Activated T-helper 1 cell treated with anti-CD3 and anti-CD28 coated beads, Interleukin-12 subunit alpha, Interleukin-12 subunit beta, Interleukin-2, Interleukin-4 antibody, amounts not matched to agents 30 ng/mL and 10 ng/mL and 1 ng/mL, durations not matched to agents 14 hours and 24 hours and 36 hours (primary cell): ENCODE measurements at regions of chr20 and their contacts with region 1.

Region 1: DNA sequence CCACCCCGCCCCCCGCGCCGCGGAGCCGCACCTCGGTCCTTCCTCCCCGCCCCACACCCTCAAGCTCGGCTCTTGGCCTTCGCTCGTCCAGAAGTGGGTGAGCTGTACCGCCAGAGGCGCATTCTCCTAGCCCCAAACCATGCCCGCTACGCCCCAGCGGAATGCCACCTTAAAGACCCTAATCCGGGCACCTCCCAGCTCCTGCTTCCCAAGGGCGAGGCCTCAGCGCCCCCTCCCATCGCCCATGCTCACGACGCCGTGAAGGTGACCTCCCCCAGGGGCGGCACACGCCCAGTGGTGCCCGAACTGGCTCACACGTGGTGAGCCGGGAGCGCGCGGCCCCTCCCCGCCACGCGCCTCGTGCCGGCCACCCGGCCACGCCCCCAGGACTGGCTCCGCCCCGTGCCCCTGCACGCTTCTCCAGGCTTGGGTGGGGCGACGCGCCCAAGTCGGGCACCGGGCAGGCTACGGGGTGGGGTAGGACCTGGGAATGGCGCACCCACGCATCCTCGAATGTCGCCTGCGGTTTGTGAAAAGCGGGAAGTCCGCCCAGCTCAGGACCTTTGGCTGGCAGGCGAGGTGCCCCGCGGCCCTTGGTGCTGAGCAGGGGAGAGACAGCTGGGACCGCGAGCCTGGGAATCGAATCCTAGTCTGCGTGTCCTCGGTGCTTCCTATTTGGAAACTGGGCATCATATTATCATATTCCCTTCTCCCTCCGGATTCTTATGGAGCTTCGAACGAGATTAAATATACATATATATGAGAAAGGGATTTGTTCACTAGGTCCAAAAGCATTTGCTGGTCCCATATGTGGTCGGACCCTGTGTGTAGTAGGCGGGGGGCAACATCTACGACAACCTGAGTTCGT is 941 bp upstream of the SOX12 start:
- DNase-seq: peak; percentile 84
- H3K4me3 Mint-ChIP-seq: peak overlapping the region; percentile 91
- H3K27ac Mint-ChIP-seq: peak overlapping the region; percentile 84
- H3K4me1 Mint-ChIP-seq: peaks cover 25% of the 10 kb centered on the region
- H3K27me3 Mint-ChIP-seq: peaks cover 6% of the 10 kb centered on the region

Region 2: DNA sequence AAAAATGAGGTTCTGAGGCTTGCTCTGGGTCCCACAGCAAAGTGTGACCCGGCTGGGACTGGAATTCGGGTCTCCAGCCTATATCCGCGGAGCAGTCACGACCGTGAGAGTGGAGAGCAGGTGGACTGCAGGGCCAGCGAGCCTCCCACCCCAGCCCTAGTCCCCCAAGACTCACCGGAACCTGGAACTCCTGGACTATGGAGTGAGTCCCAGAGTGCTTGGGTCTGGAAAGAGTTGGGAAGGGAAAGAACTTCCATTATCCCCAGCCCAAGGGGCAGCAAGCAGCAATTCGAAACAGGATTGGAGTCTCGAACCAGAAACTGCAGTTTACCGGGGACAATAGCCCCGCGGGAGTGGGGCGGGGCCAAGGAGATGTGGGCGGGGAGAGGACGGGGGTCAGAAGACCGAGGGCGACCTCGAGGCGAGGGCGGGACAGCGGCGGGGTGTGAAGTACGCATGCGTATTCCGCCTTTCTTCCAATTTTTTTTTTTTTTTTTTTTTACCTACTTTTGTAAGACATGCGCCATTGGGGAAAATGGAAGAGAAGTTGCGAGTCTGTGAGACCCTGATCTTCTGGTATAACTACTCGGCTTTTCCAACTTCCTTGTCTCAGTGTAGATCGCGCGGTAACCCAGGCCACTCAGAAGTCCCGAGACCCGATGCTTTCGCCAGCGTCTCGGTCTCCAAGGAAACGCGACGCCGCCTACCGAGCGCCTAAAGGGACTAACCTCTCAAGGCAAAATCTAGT is 34.2 kb before region 1 on chr20 and contains the start of gene C20orf96:
- intact Hi-C with region 1: loop called (anchors 1 kb)
- DNase-seq: peak; percentile 81
- H3K4me3 Mint-ChIP-seq: no peak within 1 kb of the TSS
- H3K27ac Mint-ChIP-seq: peak within 1 kb of the TSS; percentile 74
- H3K4me1 Mint-ChIP-seq: peaks cover 29% of the 10 kb centered on the region
- H3K27me3 Mint-ChIP-seq: no peaks in the 10 kb centered on the region
- total RNA-seq, gene C20orf96: 4.3 and 4.7 TPM in 2 replicates

Region 3: DNA sequence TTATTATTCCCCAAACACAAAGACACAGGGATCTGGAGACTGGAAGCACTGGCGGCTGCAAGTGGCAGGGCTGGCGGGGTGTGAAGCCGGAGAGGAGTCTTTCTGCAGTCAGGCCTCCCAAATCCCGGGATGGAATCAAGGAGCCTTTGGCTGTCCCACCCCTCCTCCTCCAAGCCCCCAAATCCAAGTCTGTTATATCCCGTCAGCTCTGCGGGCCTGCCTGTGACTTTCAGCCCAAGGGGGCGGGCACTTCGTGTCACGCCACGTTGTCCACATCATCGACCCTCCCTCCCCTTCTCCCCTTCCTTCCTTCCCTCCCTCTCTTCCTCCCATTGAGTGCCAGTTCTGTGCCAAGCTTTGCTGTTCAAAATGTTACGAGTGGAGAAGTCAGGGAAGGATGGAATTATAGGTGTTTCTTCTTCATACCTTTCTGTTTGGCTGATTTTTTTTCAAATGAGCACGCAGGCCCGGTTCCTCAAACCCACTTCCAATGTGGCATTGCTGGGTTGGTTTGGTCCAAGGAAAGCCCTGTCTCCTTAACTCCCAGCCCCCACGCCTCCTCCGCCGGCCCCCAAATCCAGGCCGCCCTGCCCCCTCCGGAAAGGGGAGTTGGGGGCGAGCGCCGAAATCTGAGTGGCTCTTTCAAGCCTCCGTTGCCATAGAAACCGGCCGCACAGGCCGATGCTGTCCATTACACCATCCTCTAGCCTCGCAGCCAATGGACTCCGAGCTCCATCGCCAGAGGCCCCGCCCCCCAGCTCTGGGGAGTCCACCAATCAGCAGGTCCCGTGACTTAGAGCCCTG is 14.4 kb before region 1 on chr20:
- intact Hi-C with region 1: loop called (anchors 1 kb)
- DNase-seq: peak; percentile 80
- H3K4me3 Mint-ChIP-seq: peak overlapping the region; percentile 81
- H3K27ac Mint-ChIP-seq: peak overlapping the region; percentile 80
- H3K4me1 Mint-ChIP-seq: peaks cover 20% of the 10 kb centered on the region
- H3K27me3 Mint-ChIP-seq: peaks cover 3% of the 10 kb centered on the region

Region 4: GRCh38 chr20:407133-407952 is 82.9 kb after region 1 on chr20:
- intact Hi-C with region 1: loop called (anchors 1 kb)
- DNase-seq: peak; percentile 59
- H3K4me3 Mint-ChIP-seq: peak overlapping the region; percentile 86
- H3K27ac Mint-ChIP-seq: peak overlapping the region; percentile 95
- H3K4me1 Mint-ChIP-seq: peaks cover 47% of the 10 kb centered on the region
- H3K27me3 Mint-ChIP-seq: no peaks in the 10 kb centered on the region

Region 5: DNA sequence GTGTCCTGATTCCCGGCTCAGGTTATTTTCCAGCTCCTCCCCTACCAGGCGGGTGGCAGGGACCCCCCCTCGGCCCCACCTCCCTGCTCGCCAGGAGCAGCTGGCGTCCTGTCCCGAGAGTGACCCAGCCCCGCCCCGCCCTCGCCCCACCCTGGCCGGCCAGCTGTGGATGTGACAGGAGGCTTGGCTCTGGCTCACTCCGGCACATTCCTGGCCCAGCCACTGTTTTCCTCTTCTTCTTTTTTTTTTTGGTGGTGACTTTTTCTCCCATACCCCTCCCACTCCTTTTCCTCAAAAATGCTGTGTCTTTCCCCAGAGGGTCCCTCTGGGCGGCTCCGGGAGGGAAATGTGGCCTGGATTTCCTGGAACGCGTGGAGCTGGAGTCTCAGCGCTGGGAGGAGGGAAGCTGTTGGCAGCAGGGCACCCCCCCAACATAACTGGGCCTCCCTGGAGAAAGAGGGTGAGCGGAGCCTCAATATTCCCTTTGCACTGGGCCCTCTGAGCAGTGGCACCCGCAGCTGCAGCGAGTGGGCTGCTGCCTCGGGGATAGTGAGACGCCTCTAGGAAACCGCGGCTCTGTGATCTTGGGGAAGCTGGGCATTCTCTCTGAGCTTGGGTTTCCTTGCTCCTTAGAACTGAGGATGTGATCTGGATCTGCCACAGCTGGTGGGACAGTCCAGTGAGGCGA is 247.5 kb after region 1 on chr20:
- intact Hi-C with region 1: no loop called
- DNase-seq: no peak
- H3K4me3 Mint-ChIP-seq: no peak overlapping the region
- H3K27ac Mint-ChIP-seq: no peak overlapping the region
- H3K4me1 Mint-ChIP-seq: no peaks in the 10 kb centered on the region
- H3K27me3 Mint-ChIP-seq: peaks cover 31% of the 10 kb centered on the region